H1 (cell line): ENCODE measurements at regions of chr15 and their contacts with region 1.

Region 1: GRCh38 chr15:91224755-91225380 is 124.8 kb downstream of the SV2B start:
- DNase-seq: peak in 1 of 2 experiments; percentile 61
- H3K4me3 ChIP-seq: no peak overlapping the region
- H3K27ac ChIP-seq: no peak overlapping the region
- H3K4me1 ChIP-seq: 0 out of 7 replicates have a peak, but pooled peaks cover 0 to 3% (median 0%) of the 10 kb centered on the region in 4 experiments
- H3K27me3 ChIP-seq: no peaks in the 10 kb centered on the region
- CTCF ChIP-seq: peak in 2 of 3 experiments; percentile 80 to 82; a peak in 3 of 4 replicates
- EP300 ChIP-seq: no peak
- POLR2A ChIP-seq: no peak
- RAD21 ChIP-seq: peak; percentile 93 to 94

Region 2: GRCh38 chr15:91061997-91062396 is 162.9 kb before region 1 on chr15:
- CTCF ChIA-PET with region 1: interaction called, 145 read pairs
- POLR2A ChIA-PET with region 1: no interaction called
- DNase-seq: no peak
- H3K4me3 ChIP-seq: no peak overlapping the region
- H3K27ac ChIP-seq: no peak overlapping the region
- H3K4me1 ChIP-seq: no peaks in the 10 kb centered on the region
- H3K27me3 ChIP-seq: no peaks in the 10 kb centered on the region; a peak in 1 of 7 replicates
- CTCF ChIP-seq: no peak
- EP300 ChIP-seq: no peak
- POLR2A ChIP-seq: no peak
- RAD21 ChIP-seq: no peak

Region 3: GRCh38 chr15:91067026-91067425 is 157.8 kb before region 1 on chr15:
- CTCF ChIA-PET with region 1: interaction called, 23 read pairs
- POLR2A ChIA-PET with region 1: no interaction called
- DNase-seq: no peak
- H3K4me3 ChIP-seq: no peak overlapping the region
- H3K27ac ChIP-seq: no peak overlapping the region
- H3K4me1 ChIP-seq: no peaks in the 10 kb centered on the region
- H3K27me3 ChIP-seq: no peaks in the 10 kb centered on the region; a peak in 1 of 7 replicates
- CTCF ChIP-seq: no peak
- EP300 ChIP-seq: no peak
- POLR2A ChIP-seq: no peak
- RAD21 ChIP-seq: no peak

Region 4: DNA sequence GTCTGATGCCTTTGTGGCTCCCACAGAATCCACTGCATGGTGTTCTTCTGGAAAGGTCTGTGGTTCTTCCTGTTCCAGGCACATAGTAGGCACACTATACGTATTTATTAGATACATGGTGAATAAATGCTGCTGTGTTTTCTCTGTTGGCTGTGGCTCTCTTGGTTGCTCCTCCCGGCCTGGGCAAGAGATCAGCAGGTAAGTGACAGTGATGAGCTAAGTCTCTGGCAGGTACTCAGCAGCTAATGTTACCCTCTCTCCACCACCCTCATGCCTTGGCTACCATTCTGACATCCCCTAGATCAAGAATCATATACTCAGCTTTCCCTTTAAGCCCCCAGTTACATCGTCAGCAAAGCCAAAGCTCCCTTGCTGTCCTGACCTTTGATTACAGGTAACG is 116.4 kb before region 1 on chr15:
- CTCF ChIA-PET with region 1: interaction called, 11 read pairs
- POLR2A ChIA-PET with region 1: no interaction called
- DNase-seq: no peak
- H3K4me3 ChIP-seq: no peak overlapping the region
- H3K27ac ChIP-seq: no peak overlapping the region
- H3K4me1 ChIP-seq: peaks cover 0 to 4% (median 0%) of the 10 kb centered on the region in 4 experiments; a peak in 3 of 7 replicates
- H3K27me3 ChIP-seq: peaks cover 0 to 2% (median under 1%) of the 10 kb centered on the region in 4 experiments; a peak in 2 of 7 replicates
- CTCF ChIP-seq: no peak
- EP300 ChIP-seq: no peak
- POLR2A ChIP-seq: no peak
- RAD21 ChIP-seq: no peak

Region 5: DNA sequence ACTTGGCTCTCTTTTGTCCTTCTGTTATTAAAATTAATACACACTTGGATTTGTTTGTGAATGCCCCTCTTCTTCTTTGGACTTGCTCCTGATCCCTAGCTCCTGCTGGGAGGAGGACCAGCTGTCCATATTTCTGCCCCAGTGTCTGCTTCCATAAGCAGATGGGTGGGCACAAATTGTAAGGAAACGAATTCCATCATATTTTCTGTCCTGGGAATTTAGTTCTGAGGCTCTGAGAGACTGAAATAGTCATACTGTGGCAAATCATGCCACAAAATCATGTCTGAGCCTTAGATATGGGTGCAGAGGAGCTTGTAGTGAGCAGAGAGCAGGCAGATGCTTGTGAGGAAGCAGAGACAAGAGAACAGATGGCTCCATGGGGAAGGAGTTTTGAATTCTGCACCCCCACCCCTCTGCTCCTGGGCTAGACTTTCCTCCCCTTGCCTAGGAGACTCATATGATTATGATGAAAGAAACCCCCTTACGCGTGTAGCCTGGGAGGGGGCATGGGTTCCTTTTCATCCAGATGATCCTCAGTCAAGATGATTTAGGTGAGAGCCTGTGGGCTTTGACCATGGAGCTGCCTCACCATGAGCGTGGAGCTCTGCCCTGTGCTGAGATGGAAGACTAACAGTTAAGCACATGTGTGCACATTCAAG is 74.2 kb before region 1 on chr15:
- CTCF ChIA-PET with region 1: interaction called, 10 read pairs
- POLR2A ChIA-PET with region 1: no interaction called
- DNase-seq: no peak
- H3K4me3 ChIP-seq: no peak overlapping the region
- H3K27ac ChIP-seq: no peak overlapping the region
- H3K4me1 ChIP-seq: no peaks in the 10 kb centered on the region
- H3K27me3 ChIP-seq: no peaks in the 10 kb centered on the region
- CTCF ChIP-seq: no peak
- EP300 ChIP-seq: no peak
- POLR2A ChIP-seq: no peak
- RAD21 ChIP-seq: no peak

Region 6: DNA sequence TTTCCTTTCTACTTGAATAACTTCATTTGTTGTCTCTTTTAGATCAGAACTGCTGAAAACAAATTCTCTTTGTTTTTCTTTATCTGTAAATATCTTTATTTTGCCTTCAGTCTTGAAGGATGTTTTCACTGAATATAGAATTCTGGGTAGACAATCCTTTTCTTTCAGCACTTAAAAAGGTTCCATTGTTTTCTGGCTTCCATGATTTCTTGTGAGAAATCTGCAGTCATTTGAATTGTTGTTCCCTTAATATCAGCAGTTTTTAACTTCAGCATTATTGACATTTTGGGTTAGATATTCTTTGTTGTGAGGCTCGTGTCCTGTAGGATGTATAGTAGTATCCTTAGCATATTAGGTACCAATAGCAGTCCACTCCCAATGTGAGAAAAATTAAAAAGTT is 59.0 kb before region 1 on chr15:
- CTCF ChIA-PET with region 1: no interaction called
- POLR2A ChIA-PET with region 1: no interaction called
- DNase-seq: no peak
- H3K4me3 ChIP-seq: no peak overlapping the region
- H3K27ac ChIP-seq: no peak overlapping the region
- H3K4me1 ChIP-seq: no peaks in the 10 kb centered on the region
- H3K27me3 ChIP-seq: no peaks in the 10 kb centered on the region
- CTCF ChIP-seq: no peak
- EP300 ChIP-seq: no peak
- POLR2A ChIP-seq: no peak
- RAD21 ChIP-seq: no peak

Region 7: GRCh38 chr15:91249591-91249990 is 24.7 kb after region 1 on chr15:
- CTCF ChIA-PET with region 1: interaction called, 16 read pairs
- POLR2A ChIA-PET with region 1: no interaction called
- DNase-seq: no peak
- H3K4me3 ChIP-seq: no peak overlapping the region
- H3K27ac ChIP-seq: no peak overlapping the region
- H3K4me1 ChIP-seq: no peaks in the 10 kb centered on the region
- H3K27me3 ChIP-seq: no peaks in the 10 kb centered on the region
- CTCF ChIP-seq: no peak
- EP300 ChIP-seq: no peak
- POLR2A ChIP-seq: no peak
- RAD21 ChIP-seq: no peak

Region 8: GRCh38 chr15:91357011-91357410 is 132.1 kb after region 1 on chr15:
- CTCF ChIA-PET with region 1: no interaction called
- POLR2A ChIA-PET with region 1: no interaction called
- DNase-seq: no peak
- H3K4me3 ChIP-seq: no peak overlapping the region
- H3K27ac ChIP-seq: no peak overlapping the region
- H3K4me1 ChIP-seq: no peaks in the 10 kb centered on the region
- H3K27me3 ChIP-seq: no peaks in the 10 kb centered on the region
- CTCF ChIP-seq: no peak
- EP300 ChIP-seq: no peak
- POLR2A ChIP-seq: no peak
- RAD21 ChIP-seq: no peak